Left ventricle myocardium superior (tissue), 1 donor: ENCODE measurements at regions of chr9 and their contacts with region 1.

Region 1: GRCh38 chr9:105716146-105716545 is 21.8 kb downstream of the TMEM38B start:
- DNase-seq: no peak
- ATAC-seq: peak; percentile 10

Region 2: DNA sequence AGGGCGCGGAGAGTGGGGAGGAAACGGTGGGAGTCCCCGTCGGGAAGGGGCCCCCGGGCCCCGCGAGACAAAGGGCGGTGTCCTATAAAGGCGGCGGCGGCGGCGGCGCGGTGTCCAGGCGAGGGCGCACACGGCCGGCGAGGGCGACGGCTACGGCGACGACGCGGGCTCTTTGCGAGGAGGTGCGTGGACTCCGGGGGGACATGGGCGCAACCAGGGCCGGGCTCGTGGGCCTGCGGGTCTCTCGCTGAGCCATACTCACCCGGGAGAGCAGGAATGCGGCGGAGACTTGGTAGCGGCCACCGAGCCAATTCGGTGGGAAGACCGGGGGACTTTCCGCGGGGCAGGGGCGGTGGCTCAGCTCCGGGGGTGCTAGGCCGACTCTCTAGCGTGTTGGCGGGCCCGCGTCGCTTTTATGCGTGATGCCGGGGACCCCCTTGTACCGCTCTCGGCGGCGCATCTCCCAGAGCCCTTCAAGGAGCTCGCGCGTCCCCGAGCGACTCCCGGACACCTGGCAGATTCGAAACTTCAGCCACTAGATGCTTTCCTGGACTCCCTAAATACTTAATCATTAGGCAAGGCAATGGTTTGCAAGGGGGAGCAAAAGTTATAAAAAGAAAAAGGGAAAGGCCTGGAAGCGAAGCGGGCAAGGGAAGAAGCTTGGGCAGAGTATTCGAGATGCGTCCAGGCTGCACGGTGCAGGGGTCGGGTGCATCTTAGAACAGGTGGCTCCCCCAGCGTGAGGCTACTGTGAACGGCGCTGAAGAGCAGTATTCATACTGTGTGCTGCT is 59.8 kb before region 1 on chr9:
- intact Hi-C with region 1: loop called (anchors 5 kb)
- DNase-seq: peak; percentile 70
- ATAC-seq: peak; percentile 96

Region 3: DNA sequence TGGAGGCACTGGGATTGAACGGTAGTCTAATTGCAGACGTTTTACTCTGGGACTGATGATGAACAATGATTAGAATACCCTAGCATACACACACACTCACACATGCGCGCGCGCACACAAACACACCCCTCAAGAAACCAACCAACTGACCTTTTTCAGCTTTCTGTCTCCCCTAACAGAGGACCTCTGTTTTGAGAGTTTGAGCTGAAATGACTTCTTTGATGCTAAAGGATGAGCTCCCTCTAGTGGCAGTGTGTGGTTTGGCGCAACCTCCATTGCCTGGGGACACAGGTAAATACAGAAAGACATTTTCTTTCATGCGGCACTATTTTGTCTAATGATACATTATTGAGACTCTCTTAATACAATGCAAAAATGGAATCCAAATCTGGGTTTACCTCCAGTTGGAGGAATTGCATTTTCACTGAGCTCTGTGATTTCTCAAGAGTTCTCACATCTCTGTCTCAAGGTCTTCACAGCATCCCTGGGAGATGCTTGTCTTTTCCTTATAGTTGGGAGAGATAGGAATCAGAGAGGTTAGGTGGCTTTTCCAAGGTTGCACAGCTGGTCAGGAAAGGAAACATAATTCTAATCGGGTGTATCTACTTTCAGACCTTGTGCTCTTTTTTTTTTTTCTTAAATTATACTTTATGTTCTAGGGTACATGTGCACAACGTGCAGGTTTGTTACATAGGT is 165.7 kb after region 1 on chr9:
- intact Hi-C with region 1: no loop called
- DNase-seq: peak; percentile 67
- ATAC-seq: peak; percentile 71